GM12878 (cell line): ENCODE measurements at regions of chr18 and their contacts with region 1.

Region 1: DNA sequence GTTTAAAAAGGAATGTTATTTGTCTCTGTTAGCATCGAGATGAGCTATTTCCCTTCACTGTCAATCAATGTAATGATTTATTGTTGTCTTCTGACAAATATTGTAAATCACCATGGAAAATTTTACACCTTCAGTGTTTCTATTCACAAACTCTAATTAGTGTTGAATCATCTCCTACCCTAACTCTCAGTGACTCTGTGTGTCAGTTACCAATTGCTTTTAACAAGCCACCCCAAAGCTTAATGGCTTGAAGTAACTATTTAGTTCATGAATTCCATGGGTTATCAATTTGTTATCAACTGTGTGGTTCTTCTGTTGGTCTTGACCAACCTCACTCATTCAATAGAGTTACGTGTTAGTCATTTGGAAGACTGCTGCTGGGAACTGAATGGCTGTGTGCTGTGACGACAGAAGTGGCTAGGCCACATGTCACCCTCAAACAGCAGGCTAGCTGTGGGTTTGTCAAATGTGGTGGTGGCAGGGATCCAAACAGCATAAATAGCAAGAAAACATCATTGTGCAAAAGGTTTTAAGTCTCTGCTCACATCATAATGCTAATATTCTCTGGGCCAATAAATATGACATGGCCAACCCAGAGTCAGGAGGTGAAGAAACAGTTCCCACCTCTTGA is 910.8 kb upstream of the CDH2 start:
- DNase-seq: no peak
- ATAC-seq: no peak
- H3K4me3 ChIP-seq: no peak overlapping the region
- H3K27ac ChIP-seq: no peak overlapping the region
- H3K4me1 ChIP-seq: no peaks in the 10 kb centered on the region
- H3K27me3 ChIP-seq: no peaks in the 10 kb centered on the region
- CTCF ChIP-seq: no peak
- EP300 ChIP-seq: no peak
- POLR2A ChIP-seq: no peak
- RAD21 ChIP-seq: no peak

Region 2: DNA sequence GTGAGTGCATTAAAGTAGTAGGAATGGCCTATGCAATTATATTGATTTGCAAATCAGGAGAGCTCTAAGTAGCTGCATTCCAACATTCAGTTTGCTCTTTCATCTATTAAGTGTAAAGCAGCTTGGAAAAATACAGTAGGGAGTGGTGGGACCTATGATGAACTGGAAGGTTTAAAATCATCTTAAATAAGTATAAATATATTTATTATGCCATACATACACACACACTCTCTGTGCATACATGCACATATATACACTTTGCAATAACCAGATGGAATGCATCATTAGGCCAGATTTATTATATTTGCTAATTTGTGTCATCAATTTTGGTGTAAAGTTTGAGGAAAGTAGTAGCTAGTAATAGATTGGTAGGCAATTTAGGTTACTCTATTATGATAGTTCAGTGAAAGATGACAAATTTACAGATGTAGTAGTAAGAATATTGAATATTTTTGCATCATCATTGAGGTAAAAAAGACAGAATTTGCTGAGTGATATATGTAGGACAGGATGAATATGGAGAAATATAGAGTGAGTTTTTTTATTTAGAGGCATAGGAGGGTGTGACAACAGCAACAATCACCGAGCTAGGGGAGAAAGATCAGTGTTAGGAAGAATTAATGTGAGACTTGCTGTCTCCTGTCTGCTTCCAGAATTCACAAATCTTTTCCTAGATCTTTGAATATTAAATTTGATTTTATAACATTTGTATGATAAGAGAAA is 50.2 kb after region 1 on chr18:
- CTCF ChIA-PET with region 1: no interaction called
- POLR2A ChIA-PET with region 1: no interaction called
- RAD21 ChIA-PET with region 1: no interaction called
- SMC1A ChIA-PET with region 1: no interaction called
- in situ Hi-C with region 1: no loop called
- intact Hi-C with region 1: loop called (anchors 5 kb)
- DNase-seq: no peak
- ATAC-seq: no peak
- H3K4me3 ChIP-seq: no peak overlapping the region
- H3K27ac ChIP-seq: no peak overlapping the region
- H3K4me1 ChIP-seq: no peaks in the 10 kb centered on the region
- H3K27me3 ChIP-seq: no peaks in the 10 kb centered on the region
- CTCF ChIP-seq: no peak
- EP300 ChIP-seq: no peak
- POLR2A ChIP-seq: no peak
- RAD21 ChIP-seq: no peak